SK-N-SH (cell line): ENCODE measurements at regions of chr10 and their contacts with region 1.

Region 1: DNA sequence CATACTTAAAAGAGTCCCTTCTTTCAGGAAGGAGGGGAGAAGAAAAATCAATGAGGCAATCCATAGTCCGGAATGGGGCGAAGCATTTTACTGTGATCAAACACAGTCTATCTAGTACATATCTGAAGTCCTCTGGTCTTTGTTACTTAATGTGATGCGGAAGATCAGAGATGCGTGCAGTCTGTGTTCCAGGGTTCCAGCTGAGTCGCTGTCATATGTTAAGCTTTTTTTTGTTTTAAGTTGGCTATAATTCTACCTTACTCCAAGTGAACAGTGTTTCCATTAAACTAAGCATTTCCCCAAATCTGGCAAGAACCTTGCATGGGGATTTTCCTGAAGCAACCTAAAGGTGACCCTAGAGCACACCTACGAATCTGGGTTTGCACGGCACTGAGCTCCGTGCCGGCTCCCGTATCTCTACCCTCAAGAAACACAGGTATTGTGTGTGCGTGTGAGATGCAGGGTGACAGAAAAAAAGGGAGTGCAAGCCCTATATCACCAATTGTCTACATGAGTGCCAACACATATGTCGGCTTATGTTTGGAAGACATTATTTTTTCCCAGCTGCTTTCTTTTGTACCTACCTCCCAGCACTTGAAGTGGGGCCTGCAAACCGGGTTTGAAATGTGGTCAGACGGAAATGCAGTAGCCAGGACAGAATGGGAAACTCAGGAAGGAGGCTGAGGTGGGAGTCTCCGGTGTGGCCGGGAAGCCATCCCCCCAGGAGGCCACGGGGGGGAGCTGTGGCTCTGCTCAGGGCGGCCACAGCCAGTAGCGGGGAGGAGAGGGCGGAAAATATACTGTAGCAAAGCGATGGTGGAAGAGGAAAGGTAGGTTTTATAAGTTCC is 435.8 kb upstream of the MGMT start:
- DNase-seq: peak; percentile 90
- H3K4me3 ChIP-seq: peak overlapping the region in 1 of 2 experiments; percentile 46; a peak in 1 of 4 replicates
- H3K27ac ChIP-seq: no peak overlapping the region
- H3K4me1 ChIP-seq: no peaks in the 10 kb centered on the region; a peak in 1 of 4 replicates
- H3K27me3 ChIP-seq: no peaks in the 10 kb centered on the region
- CTCF ChIP-seq: peak; percentile 34
- EP300 ChIP-seq: no peak
- RAD21 ChIP-seq: peak; percentile 91

Region 2: DNA sequence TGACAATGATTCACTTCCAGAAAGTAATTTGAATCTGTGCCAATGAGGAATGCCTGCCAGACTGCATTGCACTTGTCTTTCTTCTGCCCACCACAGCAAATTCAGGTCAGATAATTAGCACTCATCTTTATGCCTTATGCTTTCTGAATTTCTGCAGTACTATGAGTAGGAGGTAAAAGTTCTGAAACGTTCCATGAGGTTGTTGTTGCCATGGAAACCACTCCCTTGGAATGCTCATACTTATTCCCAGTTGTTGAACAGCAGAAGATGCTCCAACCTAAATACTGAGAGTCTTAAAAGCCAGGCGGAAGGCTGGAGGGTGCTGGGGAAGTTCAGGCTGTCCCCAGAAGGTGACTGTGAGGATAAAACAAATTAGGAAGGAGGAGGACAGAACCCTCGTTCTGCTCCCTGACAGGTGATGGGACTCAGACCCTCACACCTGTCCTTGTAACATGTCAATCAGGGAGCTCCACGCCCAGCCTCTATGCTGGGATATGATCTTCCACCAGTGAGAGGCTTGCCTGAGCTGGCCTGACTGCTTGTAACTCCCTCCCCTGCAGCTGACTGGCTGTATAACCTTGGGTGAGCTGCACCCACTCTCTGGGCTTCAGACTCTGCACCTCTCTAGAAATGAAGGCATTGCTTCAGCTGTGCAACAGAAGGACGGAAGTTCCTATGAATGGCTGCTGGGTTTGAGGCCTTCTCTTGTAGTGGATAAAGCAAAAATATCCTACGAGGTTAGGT is 118.5 kb before region 1 on chr10:
- CTCF ChIA-PET with region 1: no interaction called
- POLR2A ChIA-PET with region 1: no interaction called
- DNase-seq: no peak
- H3K4me3 ChIP-seq: no peak overlapping the region
- H3K27ac ChIP-seq: no peak overlapping the region
- H3K4me1 ChIP-seq: no peaks in the 10 kb centered on the region
- H3K27me3 ChIP-seq: no peaks in the 10 kb centered on the region
- CTCF ChIP-seq: no peak
- EP300 ChIP-seq: no peak
- RAD21 ChIP-seq: no peak

Region 3: GRCh38 chr10:128990986-128991385 is 40.2 kb before region 1 on chr10:
- CTCF ChIA-PET with region 1: no interaction called
- POLR2A ChIA-PET with region 1: no interaction called
- DNase-seq: no peak
- H3K4me3 ChIP-seq: no peak overlapping the region
- H3K27ac ChIP-seq: no peak overlapping the region
- H3K4me1 ChIP-seq: no peaks in the 10 kb centered on the region
- H3K27me3 ChIP-seq: no peaks in the 10 kb centered on the region
- CTCF ChIP-seq: no peak
- EP300 ChIP-seq: no peak
- RAD21 ChIP-seq: no peak

Region 4: DNA sequence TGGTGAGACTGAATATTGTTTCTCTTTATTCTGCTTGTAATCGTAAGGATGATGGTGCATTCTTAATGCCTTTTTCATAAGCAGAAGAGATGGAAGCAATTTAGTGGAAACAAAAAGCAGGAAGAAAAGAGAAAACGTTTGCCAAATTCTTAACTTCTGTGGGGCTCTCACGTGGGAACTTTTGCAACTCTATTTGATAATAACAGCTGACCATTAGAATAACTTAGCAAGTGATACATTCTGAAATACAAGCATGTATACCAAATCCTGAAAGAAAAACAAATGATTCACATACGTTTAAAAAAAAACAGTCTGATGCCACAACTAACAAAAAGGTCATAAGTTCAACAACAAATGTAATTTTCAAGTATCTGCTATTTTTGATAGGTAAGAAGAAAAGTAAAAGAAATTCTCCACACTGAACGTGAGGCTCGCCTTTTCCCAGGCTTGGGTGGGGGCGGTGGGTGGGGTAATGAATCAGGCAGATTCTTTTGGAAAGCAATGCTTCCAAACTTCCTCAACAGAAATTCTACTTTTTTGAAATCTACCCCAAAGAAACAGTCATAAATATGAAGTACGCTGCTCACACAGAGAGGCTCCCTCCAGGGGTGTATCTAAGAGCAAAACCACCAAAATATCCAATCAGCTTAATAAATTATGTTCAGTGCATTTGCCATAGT is 10.4 kb before region 1 on chr10:
- CTCF ChIA-PET with region 1: interaction called, 16 read pairs
- POLR2A ChIA-PET with region 1: no interaction called
- DNase-seq: no peak
- H3K4me3 ChIP-seq: no peak overlapping the region
- H3K27ac ChIP-seq: no peak overlapping the region
- H3K4me1 ChIP-seq: peaks cover 0 to 5% of the 10 kb centered on the region in 2 experiments; a peak in 2 of 4 replicates
- H3K27me3 ChIP-seq: no peaks in the 10 kb centered on the region
- CTCF ChIP-seq: no peak
- EP300 ChIP-seq: no peak
- RAD21 ChIP-seq: no peak

Region 5: DNA sequence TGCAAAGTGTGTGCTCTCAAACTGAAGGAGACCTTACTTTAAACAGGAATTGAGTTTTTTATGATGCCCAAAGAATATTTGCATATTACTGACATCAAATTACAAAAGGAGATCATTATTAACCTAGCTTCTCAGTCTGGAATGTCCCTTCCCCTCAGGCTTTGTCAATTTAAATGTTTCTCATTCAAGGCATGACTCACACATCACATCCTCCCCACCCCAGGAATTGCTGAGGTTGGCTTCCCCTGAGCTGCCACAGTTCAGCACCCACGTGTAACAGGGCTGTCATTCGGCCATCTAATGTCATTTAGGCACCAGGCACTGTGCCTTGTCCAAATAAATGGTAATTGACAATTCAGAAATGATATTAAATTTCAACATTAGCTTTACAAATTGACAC is 129.9 kb after region 1 on chr10:
- CTCF ChIA-PET with region 1: no interaction called
- POLR2A ChIA-PET with region 1: no interaction called
- DNase-seq: no peak
- H3K4me3 ChIP-seq: no peak overlapping the region
- H3K27ac ChIP-seq: no peak overlapping the region
- H3K4me1 ChIP-seq: no peaks in the 10 kb centered on the region; a peak in 1 of 4 replicates
- H3K27me3 ChIP-seq: no peaks in the 10 kb centered on the region
- CTCF ChIP-seq: no peak
- EP300 ChIP-seq: no peak
- RAD21 ChIP-seq: no peak

Region 6: GRCh38 chr10:130127364-130128061 is 1096.3 kb after region 1 on chr10:
- CTCF ChIA-PET with region 1: interaction called, 13 read pairs
- POLR2A ChIA-PET with region 1: no interaction called
- DNase-seq: peak; percentile 91
- H3K4me3 ChIP-seq: peak overlapping the region in 1 of 2 experiments; percentile 1; a peak in 1 of 4 replicates
- H3K27ac ChIP-seq: no peak overlapping the region
- H3K4me1 ChIP-seq: peaks cover 4 to 5% of the 10 kb centered on the region in 2 experiments; a peak in 1 of 4 replicates
- H3K27me3 ChIP-seq: no peaks in the 10 kb centered on the region
- CTCF ChIP-seq: peak; percentile 85
- EP300 ChIP-seq: no peak
- RAD21 ChIP-seq: peak; percentile 80